ENCODE measurements at regions of chr18 and their contacts with region 1.

Region 1: GRCh38 chr18:57362714-57363113 is 10.4 kb downstream of the ST8SIA3 start:
- DNase-seq: no peak
- ATAC-seq: no peak
- H3K4me3 ChIP-seq: no peak overlapping the region
- H3K27ac ChIP-seq: no peak overlapping the region
- H3K4me1 ChIP-seq: no peaks in the 10 kb centered on the region
- H3K27me3 ChIP-seq: peaks cover 0 to 37% (median 4%) of the 10 kb centered on the region in 9 donors
- CTCF ChIP-seq: no peak
- POLR2A ChIP-seq: no peak

Region 2: GRCh38 chr18:56844556-56844955 is 518.2 kb before region 1 on chr18:
- intact Hi-C with region 1: no loop called
- DNase-seq: no peak
- ATAC-seq: no peak
- H3K4me3 ChIP-seq: no peak overlapping the region
- H3K27ac ChIP-seq: no peak overlapping the region
- H3K4me1 ChIP-seq: no peaks in the 10 kb centered on the region
- H3K27me3 ChIP-seq: no peaks in the 10 kb centered on the region
- CTCF ChIP-seq: no peak
- POLR2A ChIP-seq: no peak

Region 3: GRCh38 chr18:57326718-57327323 is 35.9 kb before region 1 on chr18:
- intact Hi-C with region 1: loop called in 1 of 10 experiments (anchors 5 kb)
- DNase-seq: no peak
- ATAC-seq: no peak
- H3K4me3 ChIP-seq: no peak overlapping the region
- H3K27ac ChIP-seq: no peak overlapping the region
- H3K4me1 ChIP-seq: no peaks in the 10 kb centered on the region
- H3K27me3 ChIP-seq: peaks cover 0 to 5% (median 0%) of the 10 kb centered on the region in 9 donors
- CTCF ChIP-seq: no peak
- POLR2A ChIP-seq: no peak